ENCODE measurements at regions of chr2 and their contacts with region 1.

Region 1: GRCh38 chr2:8049851-8050571 is 631.8 kb upstream of the ID2 start:
- DNase-seq: peak; percentile 88
- H3K4me3 Mint-ChIP-seq: no peak overlapping the region
- H3K27ac Mint-ChIP-seq: peak overlapping the region; percentile 78
- H3K4me1 Mint-ChIP-seq: peaks cover 28% of the 10 kb centered on the region
- H3K27me3 Mint-ChIP-seq: peaks cover 1% of the 10 kb centered on the region

Region 2: GRCh38 chr2:7437716-7438632 is 612.0 kb before region 1 on chr2:
- CTCF ChIA-PET with region 1: no interaction called
- POLR2A ChIA-PET with region 1: no interaction called
- intact Hi-C with region 1: loop called (anchors 5 kb)
- DNase-seq: peak; percentile 65
- H3K4me3 Mint-ChIP-seq: peak overlapping the region; percentile 29
- H3K27ac Mint-ChIP-seq: peak overlapping the region; percentile 91
- H3K4me1 Mint-ChIP-seq: peaks cover 74% of the 10 kb centered on the region
- H3K27me3 Mint-ChIP-seq: peaks cover 7% of the 10 kb centered on the region

Region 3: DNA sequence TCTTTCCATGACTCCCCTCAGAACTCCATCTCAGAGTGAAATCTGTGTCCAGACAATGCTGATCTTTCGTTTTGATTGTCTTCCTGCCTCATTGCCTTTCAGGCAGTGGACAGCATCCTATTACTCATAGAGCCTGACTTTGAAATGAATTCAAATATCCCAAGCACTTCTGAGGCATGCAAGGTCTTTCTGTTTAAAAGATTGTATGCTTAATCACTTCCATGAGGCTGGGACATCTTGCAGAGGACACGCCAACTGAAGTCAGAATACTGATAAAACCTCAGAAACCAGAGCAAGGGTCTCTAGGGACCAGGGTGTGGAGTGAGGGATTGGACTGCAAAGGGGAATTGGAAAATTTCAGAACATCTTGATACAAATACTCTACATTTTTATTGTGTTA is 204.7 kb before region 1 on chr2:
- CTCF ChIA-PET with region 1: no interaction called
- POLR2A ChIA-PET with region 1: no interaction called
- intact Hi-C with region 1: loop called (anchors 2 kb)
- DNase-seq: no peak
- H3K4me3 Mint-ChIP-seq: no peak overlapping the region
- H3K27ac Mint-ChIP-seq: no peak overlapping the region
- H3K4me1 Mint-ChIP-seq: peaks cover 36% of the 10 kb centered on the region
- H3K27me3 Mint-ChIP-seq: peaks cover 7% of the 10 kb centered on the region

Region 4: GRCh38 chr2:7984693-7985353 is 65.2 kb before region 1 on chr2:
- CTCF ChIA-PET with region 1: no interaction called
- POLR2A ChIA-PET with region 1: no interaction called
- intact Hi-C with region 1: loop called (anchors 1 kb)
- DNase-seq: no peak
- H3K4me3 Mint-ChIP-seq: no peak overlapping the region
- H3K27ac Mint-ChIP-seq: peak overlapping the region; percentile 66
- H3K4me1 Mint-ChIP-seq: peaks cover 28% of the 10 kb centered on the region
- H3K27me3 Mint-ChIP-seq: peaks cover 5% of the 10 kb centered on the region

Region 5: GRCh38 chr2:8132351-8132831 is 82.4 kb after region 1 on chr2:
- CTCF ChIA-PET with region 1: no interaction called
- POLR2A ChIA-PET with region 1: no interaction called
- intact Hi-C with region 1: no loop called
- DNase-seq: no peak
- H3K4me3 Mint-ChIP-seq: no peak overlapping the region
- H3K27ac Mint-ChIP-seq: no peak overlapping the region
- H3K4me1 Mint-ChIP-seq: no peaks in the 10 kb centered on the region
- H3K27me3 Mint-ChIP-seq: no peaks in the 10 kb centered on the region

Region 6: DNA sequence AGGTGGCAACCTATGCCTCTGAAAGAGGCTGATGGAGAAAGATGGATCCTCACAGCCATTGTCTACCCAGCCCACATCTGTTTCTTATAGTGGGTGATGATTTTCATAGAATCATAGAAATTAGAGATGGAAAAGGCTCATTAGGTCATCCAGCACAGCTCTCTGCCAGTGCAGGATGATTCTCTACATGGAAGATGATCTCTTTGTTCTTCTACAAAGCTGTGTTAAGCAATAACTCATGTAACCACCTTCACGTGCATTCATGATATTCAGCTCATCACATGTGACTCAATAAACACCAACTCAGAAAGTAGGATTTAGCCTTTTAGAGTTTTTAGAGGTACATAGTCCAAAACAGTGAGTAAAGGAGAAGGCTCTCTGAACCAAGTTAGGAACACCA is 92.5 kb after region 1 on chr2:
- CTCF ChIA-PET with region 1: no interaction called
- POLR2A ChIA-PET with region 1: no interaction called
- intact Hi-C with region 1: no loop called
- DNase-seq: no peak
- H3K4me3 Mint-ChIP-seq: no peak overlapping the region
- H3K27ac Mint-ChIP-seq: no peak overlapping the region
- H3K4me1 Mint-ChIP-seq: peaks cover 10% of the 10 kb centered on the region
- H3K27me3 Mint-ChIP-seq: no peaks in the 10 kb centered on the region

Region 7: GRCh38 chr2:8152392-8153257 is 102.6 kb after region 1 on chr2:
- CTCF ChIA-PET with region 1: no interaction called
- POLR2A ChIA-PET with region 1: no interaction called
- intact Hi-C with region 1: loop called (anchors 1 kb)
- DNase-seq: no peak
- H3K4me3 Mint-ChIP-seq: no peak overlapping the region
- H3K27ac Mint-ChIP-seq: no peak overlapping the region
- H3K4me1 Mint-ChIP-seq: peaks cover 28% of the 10 kb centered on the region
- H3K27me3 Mint-ChIP-seq: no peaks in the 10 kb centered on the region

Region 8: GRCh38 chr2:8488001-8488738 is 438.2 kb after region 1 on chr2:
- CTCF ChIA-PET with region 1: no interaction called
- POLR2A ChIA-PET with region 1: no interaction called
- intact Hi-C with region 1: loop called (anchors 5 kb)
- DNase-seq: peak; percentile 88
- H3K4me3 Mint-ChIP-seq: peak overlapping the region; percentile 77
- H3K27ac Mint-ChIP-seq: peak overlapping the region; percentile 91
- H3K4me1 Mint-ChIP-seq: peaks cover 72% of the 10 kb centered on the region
- H3K27me3 Mint-ChIP-seq: no peaks in the 10 kb centered on the region